ENCODE measurements at regions of chr2 and their contacts with region 1.

Region 1: DNA sequence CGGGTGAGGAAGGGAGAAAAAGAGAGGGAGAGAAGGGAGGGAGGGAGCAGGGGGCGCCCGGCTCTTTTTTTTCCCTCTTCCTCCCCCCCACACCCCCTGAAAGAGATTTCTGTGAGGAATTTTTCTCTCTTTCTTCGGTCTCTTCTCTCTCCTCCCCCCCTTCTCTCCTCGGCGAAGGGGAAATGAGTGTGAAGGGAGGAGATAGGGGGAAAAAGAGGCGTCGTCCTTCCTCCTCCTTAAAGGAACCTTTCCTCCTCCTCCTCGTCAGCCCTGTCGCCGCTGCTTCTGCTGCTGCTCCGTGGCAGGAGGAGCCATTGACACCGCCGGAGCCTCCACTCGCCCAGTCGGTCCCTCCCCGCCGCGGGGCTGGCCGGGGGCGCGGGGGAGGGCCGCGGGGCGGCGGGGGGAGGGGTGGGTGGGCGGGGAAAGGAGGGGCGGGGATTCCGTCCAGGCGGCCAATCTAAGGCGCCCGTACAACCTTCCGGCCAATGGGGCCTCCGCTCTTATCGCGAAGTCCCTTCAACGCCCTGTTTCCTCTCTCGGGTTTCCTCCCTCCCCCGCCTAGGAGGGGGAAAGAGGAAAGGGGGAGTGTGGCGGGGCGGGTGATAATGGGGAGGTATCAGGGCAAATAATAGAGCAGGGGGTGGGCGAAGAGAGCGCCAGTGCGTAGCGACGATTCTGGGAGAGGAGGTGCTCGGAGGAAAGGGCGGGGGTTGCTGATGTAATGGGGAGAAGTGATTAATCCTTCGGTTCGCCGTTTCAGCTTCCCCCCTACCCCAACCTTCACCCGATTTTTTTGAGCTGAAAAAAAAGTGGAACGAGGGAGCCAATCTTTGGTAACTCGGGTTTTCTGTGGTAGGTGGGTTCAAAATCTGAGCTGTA is at the start of gene FBXO11:
- DNase-seq: peak; percentile 97 to 99 (median 98)
- H3K4me3 ChIP-seq: peak within 1 kb of the TSS; percentile 22 to 99 (median 73)
- H3K27ac ChIP-seq: peak within 1 kb of the TSS; percentile 95 to 99 (median 99)
- H3K4me1 ChIP-seq: peaks cover 4 to 21% of the 10 kb centered on the region in 2 donors
- H3K27me3 ChIP-seq: no peaks in the 10 kb centered on the region
- CTCF ChIP-seq: peak in 5 of 6 experiments; percentile 55 to 81 (median 63)
- POLR2A ChIP-seq: peak; percentile 84 to 95
- total RNA-seq, gene FBXO11: 21.7 to 61.7 (median 47.6) TPM

Region 2: DNA sequence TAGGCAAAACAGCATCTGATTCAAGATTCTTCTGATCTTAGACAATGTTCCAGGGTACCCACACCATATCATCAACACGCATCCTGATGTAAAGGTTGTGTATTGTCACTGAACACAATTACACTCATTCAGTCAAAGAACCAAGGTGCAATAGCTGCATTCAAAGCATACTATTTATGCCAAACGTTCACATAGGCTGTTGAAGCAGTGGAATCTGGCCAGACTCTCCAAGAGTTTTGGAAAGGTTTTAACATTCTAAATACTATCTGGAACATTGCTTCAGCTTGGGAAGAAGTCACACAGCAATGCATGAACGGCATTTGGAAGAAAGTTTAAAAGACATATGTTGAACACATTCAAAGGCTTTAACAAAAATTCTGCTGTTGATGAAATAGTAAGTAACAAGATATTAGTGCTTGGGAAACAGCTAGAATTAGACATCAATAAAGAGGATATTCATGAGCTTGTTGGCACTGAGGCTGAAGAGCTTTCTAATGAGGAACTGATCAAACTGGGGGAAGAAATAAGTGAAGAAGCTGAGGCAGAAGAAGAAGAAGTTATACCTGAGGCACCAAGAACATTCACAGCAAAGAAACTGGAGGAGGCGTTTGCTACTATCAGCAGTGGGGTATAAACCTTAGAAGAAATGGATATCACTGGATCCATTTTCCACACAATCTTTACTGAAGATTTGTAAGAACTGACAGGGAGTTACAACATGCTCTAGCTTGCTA is 171.1 kb before region 1 on chr2:
- intact Hi-C with region 1: no loop called
- DNase-seq: no peak
- H3K4me3 ChIP-seq: no peak overlapping the region
- H3K27ac ChIP-seq: no peak overlapping the region
- H3K4me1 ChIP-seq: no peaks in the 10 kb centered on the region
- H3K27me3 ChIP-seq: no peaks in the 10 kb centered on the region
- CTCF ChIP-seq: no peak
- POLR2A ChIP-seq: no peak

Region 3: DNA sequence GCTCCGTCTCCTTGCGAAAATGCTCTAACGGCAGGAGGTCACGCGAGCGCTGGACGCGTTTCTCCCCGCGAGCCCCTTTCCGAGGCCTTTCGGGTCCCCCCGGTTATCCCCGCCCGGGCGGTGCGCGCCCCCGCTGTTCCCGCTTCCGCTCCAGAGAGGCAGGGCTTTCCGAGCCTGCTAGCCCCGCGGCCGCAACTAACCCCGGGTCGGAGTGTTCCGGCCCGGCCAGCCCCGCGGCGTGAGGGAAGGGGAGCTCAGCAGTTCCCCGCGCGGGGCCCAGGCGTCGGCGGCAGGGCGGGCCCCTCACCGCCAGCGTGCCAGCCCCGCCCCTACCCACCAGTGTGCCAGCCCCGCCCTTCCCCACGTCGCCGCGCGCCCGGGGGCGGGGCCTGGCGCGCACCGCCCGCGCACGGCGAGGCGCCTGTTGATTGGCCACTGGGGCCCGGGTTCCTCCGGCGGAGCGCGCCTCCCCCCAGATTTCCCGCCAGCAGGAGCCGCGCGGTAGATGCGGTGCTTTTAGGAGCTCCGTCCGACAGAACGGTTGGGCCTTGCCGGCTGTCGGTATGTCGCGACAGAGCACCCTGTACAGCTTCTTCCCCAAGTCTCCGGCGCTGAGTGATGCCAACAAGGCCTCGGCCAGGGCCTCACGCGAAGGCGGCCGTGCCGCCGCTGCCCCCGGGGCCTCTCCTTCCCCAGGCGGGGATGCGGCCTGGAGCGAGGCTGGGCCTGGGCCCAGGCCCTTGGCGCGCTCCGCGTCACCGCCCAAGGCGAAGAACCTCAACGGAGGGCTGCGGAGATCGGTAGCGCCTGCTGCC is 123.5 kb before region 1 on chr2 and contains the start of gene MSH6:
- intact Hi-C with region 1: loop called in 1 of 2 experiments (anchors 10 kb)
- DNase-seq: peak; percentile 88 to 93 (median 90)
- H3K4me3 ChIP-seq: peak within 1 kb of the TSS; percentile 78 to 93 (median 84)
- H3K27ac ChIP-seq: peak within 1 kb of the TSS; percentile 89 to 98 (median 96)
- H3K4me1 ChIP-seq: peaks cover 15 to 16% of the 10 kb centered on the region in 2 donors
- H3K27me3 ChIP-seq: no peaks in the 10 kb centered on the region
- CTCF ChIP-seq: no peak
- POLR2A ChIP-seq: peak; percentile 78 to 97
- total RNA-seq, gene MSH6: 38.6 to 119 (median 58.4) TPM

Region 4: DNA sequence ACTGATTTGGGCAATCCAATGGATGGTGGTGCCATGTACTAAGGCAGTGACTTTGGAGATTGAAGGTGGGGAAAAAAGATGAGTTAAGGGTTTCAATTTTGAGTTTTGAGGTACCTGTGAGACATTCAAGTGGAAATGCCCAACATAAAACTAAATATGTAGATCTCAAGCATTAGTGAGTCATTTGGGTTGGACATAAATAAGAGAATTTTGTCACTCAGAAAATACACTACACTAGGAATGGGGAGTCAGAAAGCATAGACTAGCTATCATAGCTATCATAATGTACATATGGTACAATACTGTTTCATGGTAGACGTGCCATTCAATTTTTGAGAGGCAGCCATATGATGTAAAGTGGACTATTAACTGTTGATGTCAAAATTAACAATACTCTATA is 56.2 kb before region 1 on chr2:
- intact Hi-C with region 1: loop called in 1 of 2 experiments (anchors 10 kb)
- DNase-seq: no peak
- H3K4me3 ChIP-seq: no peak overlapping the region
- H3K27ac ChIP-seq: no peak overlapping the region
- H3K4me1 ChIP-seq: peaks cover 0 to 27% of the 10 kb centered on the region in 2 donors
- H3K27me3 ChIP-seq: no peaks in the 10 kb centered on the region
- CTCF ChIP-seq: no peak
- POLR2A ChIP-seq: no peak

Region 5: DNA sequence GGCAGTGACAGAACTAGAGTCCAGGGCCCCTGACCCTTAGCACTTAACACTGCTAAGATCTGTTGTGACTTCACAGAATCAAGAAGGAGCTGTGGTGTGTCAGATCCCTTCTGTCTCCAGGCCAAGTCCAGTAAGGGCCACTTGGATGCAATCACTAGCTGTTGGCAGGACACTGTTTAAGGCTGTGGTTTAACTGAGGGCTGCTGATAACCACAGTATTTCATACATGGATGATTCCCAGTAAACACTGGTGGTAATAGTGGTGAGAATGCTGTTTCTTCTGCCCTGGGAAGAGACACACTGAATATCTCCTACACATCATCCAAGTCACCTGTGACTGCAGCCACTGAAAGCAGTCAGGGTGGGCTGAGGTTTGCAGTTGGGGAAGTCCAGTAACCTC is 77.6 kb after region 1 on chr2:
- intact Hi-C with region 1: no loop called
- DNase-seq: no peak
- H3K4me3 ChIP-seq: no peak overlapping the region
- H3K27ac ChIP-seq: no peak overlapping the region
- H3K4me1 ChIP-seq: no peaks in the 10 kb centered on the region
- H3K27me3 ChIP-seq: peaks cover 4% of the 10 kb centered on the region
- CTCF ChIP-seq: no peak
- POLR2A ChIP-seq: no peak

Region 6: GRCh38 chr2:48107326-48107925 is 201.0 kb after region 1 on chr2:
- intact Hi-C with region 1: loop called in 1 of 2 experiments (anchors 10 kb)
- DNase-seq: peak in 4 of 7 donors; percentile 32 to 56 (median 36)
- H3K4me3 ChIP-seq: no peak overlapping the region
- H3K27ac ChIP-seq: peak overlapping the region in 2 of 5 donors; percentile 61
- H3K4me1 ChIP-seq: peaks cover 10 to 16% of the 10 kb centered on the region in 2 donors
- H3K27me3 ChIP-seq: no peaks in the 10 kb centered on the region
- CTCF ChIP-seq: no peak
- POLR2A ChIP-seq: no peak

Region 7: DNA sequence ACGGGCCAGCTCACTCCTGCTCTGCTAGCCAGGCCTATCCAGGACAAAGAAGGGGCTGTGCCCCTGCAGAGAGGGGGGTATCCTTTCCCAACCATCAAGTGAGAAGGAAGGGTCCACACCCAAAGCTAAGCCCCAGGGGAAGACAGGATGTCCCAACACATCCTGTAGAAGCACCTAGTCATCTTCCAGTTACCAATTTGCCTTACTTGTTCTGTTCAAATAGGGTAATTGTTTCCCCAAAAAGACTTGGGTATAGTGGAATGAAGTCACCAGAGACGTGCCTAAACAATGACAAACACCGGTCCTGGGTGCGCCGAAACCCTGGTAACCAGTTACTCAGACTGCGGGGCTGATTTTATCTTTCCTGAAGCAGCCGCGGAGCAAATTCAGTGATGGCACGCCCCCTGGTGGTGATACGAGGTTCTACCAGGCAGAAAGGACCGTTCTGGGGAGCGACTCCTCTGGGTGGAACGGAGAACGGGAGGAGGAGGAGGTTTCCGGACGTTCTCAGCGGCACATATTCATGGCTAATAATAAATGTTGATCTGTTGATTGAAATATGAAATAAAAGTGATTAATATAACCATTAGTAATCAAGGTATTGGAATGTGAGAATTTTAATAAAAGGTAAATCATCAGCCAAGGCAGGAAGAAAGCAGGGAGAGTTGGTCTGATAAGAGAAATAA is 514.3 kb after region 1 on chr2:
- intact Hi-C with region 1: loop called in 1 of 2 experiments (anchors 10 kb)
- DNase-seq: peak; percentile 85 to 97 (median 88)
- H3K4me3 ChIP-seq: peak overlapping the region in 1 of 4 donors; percentile 24
- H3K27ac ChIP-seq: peak overlapping the region in 1 of 5 donors; percentile 3
- H3K4me1 ChIP-seq: peaks cover 5 to 10% of the 10 kb centered on the region in 2 donors
- H3K27me3 ChIP-seq: no peaks in the 10 kb centered on the region
- CTCF ChIP-seq: peak; percentile 97 to 99 (median 99)
- POLR2A ChIP-seq: no peak